ENCODE measurements at regions of chr10 and their contacts with region 1.

Region 1: DNA sequence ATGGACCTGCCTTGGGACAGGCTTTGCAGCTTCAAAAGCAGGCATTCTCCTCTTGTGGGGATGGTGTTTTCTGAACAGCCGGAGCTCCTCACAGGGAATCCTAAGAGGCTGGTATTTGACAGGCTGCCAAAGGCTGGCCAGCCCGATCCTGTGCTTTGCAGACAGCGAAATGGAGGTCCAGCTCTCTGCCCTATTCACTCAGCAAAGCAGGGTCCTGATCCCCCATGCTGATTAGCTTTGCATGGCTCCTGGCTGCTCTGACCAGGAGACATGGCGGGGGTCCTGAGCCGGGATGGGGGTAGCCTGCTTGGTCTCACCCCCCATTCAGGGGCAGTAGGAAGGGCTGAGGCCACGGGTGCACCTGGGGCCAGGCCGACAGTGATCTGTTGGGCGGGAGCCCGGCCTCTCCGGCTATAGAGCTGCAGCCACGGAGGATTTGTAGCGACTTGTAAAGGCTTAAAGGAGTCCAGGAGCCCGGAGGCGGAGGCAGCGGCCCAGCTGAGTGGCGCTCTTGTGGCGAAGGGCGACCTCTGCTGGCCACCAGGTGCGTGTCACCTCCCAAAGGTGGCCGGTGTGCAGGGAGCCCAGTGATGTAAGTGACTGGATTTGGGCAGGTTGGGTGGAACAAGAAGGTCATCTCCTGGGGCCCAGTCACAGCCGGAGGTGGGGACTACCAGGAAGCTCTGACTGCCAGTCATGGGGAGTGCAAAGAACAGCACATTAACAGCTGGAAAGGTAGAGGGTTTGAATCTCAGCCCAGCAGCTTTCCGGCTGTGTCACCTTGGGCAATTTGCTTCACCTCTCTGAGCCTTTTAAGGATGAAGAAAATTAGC is 126.5 kb downstream of the ZMIZ1 start:
- DNase-seq: peak; percentile 92

Region 2: DNA sequence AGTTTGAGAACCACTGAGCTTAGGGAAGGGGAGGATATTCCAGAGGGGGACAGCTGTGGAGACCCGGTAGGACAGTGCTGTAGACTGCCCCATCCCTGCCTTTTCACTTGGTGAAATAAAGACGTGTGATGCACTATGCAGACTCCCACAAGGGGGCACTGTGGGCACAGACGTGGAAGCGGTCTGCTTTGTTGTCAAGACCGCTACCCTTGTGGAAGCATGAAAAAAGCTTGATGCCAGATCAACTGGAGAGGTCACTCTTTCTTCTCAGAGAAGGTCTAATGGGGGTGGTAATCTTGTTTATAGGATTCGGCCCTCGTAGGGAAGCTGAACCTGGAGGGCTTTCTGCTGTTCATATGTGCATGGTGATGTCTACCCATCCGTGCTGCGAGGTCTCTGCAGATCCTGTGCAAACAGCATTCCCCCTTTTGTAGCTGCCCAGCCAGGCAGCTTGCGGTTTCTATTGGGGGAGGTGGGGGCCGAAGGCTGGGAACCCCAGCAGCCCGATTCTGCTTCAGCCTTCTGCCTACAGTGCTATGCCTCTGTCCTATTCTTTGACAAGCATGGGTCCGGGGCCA is 1147.9 kb before region 1 on chr10:
- intact Hi-C with region 1: loop called (anchors 2 kb)
- DNase-seq: peak; percentile 90

Region 3: GRCh38 chr10:78302989-78303854 is 892.1 kb before region 1 on chr10:
- intact Hi-C with region 1: loop called (anchors 2 kb)
- DNase-seq: peak; percentile 98

Region 4: GRCh38 chr10:78657163-78657861 is 538.0 kb before region 1 on chr10:
- intact Hi-C with region 1: loop called (anchors 5 kb)
- DNase-seq: peak; percentile 81

Region 5: GRCh38 chr10:78972947-78973900 is 222.1 kb before region 1 on chr10:
- intact Hi-C with region 1: loop called (anchors 2 kb)
- DNase-seq: peak; percentile 91

Region 6: DNA sequence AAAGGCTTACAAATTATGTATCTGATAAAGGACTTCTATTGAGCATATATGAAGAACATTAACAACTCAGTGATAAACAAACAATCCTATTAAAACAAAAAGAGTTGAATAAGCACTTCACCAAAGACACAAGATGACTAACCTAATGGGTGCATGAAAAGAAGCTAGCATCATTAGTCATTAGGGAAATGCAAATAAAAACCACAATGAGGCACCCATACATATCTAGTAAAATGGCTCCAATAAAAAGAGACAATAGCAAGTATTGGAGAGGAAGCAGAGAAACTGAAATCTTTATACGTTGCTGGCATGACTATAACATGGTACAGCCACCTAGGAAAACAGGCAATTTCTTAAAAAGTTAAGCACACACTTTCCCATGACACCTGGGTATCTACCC is 204.1 kb before region 1 on chr10:
- intact Hi-C with region 1: no loop called
- DNase-seq: no peak